ENCODE measurements at regions of chr20 and their contacts with region 1.

Region 1: DNA sequence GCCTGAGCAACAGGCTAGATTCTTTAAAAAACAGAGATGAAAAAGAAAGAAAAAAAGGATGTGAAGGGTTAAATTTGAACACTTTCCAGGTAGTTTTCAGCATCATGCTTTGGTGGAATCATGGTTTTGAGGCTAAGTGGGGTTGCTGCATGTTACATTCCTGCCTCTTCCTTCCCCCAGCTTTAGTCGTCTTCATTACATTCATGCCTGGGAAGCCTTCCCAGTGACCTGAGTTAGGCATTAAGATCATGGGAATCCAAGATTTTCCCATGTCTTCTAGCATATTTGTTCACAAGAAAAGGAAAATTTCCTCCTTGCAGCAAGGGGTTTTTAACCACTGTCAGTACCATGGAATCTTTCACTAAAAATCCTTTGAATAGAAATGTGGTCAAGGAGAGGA is 12.0 kb downstream of the TPX2 start:
- DNase-seq: no peak
- ATAC-seq: no peak
- H3K4me3 Mint-ChIP-seq: no peak overlapping the region
- H3K27ac Mint-ChIP-seq: no peak overlapping the region
- H3K4me1 Mint-ChIP-seq: peaks cover 8% of the 10 kb centered on the region
- H3K27me3 Mint-ChIP-seq: no peaks in the 10 kb centered on the region

Region 2: GRCh38 chr20:31698803-31699718 is 52.1 kb before region 1 on chr20:
- CTCF ChIA-PET with region 1: no interaction called
- POLR2A ChIA-PET with region 1: no interaction called
- intact Hi-C with region 1: no loop called
- DNase-seq: peak; percentile 46
- ATAC-seq: peak; percentile 93
- H3K4me3 Mint-ChIP-seq: peak overlapping the region; percentile 26
- H3K27ac Mint-ChIP-seq: peak overlapping the region; percentile 89
- H3K4me1 Mint-ChIP-seq: peaks cover 68% of the 10 kb centered on the region
- H3K27me3 Mint-ChIP-seq: no peaks in the 10 kb centered on the region

Region 3: DNA sequence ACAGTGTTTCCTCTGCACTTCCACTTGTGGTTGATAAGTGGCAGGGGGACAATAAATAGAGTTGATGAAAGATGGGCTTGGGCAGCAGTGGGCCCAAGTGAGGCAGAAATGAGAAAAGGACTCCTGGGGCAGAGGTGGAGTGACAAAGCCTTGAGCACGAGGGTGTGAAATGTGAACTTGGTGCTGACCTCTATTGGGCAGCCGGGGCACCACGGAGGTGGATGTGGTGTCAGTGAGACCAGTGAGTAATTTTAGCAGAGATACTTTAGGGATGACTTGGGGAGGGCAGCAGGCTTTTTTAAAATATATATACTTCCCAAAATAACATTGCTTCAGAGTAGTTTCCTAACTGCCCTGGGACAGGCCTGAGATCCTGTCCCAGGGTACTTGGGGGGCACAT is 37.5 kb after region 1 on chr20:
- CTCF ChIA-PET with region 1: no interaction called
- POLR2A ChIA-PET with region 1: no interaction called
- intact Hi-C with region 1: loop called in 1 of 2 experiments (anchors 5 kb)
- DNase-seq: peak; percentile 8
- ATAC-seq: no peak
- H3K4me3 Mint-ChIP-seq: no peak overlapping the region
- H3K27ac Mint-ChIP-seq: no peak overlapping the region
- H3K4me1 Mint-ChIP-seq: no peaks in the 10 kb centered on the region
- H3K27me3 Mint-ChIP-seq: no peaks in the 10 kb centered on the region

Measured in activated CD4-positive, alpha-beta T cell treated with anti-CD3 and anti-CD28 coated beads for 36 hours (primary cell).